ENCODE measurements at regions of chr3 and their contacts with region 1.

Region 1: GRCh38 chr3:13895155-13896105 is 15.6 kb upstream of the WNT7A start:
- DNase-seq: peak; percentile 47
- ATAC-seq: peak; percentile 100
- H3K4me3 ChIP-seq: peak overlapping the region; percentile 67
- H3K27ac ChIP-seq: no peak overlapping the region
- H3K4me1 ChIP-seq: no peaks in the 10 kb centered on the region
- H3K27me3 ChIP-seq: peaks cover 0 to 3% of the 10 kb centered on the region in 2 experiments; a peak in 1 of 4 replicates
- CTCF ChIP-seq: no peak
- EP300 ChIP-seq: no peak
- POLR2A ChIP-seq: no peak
- RAD21 ChIP-seq: no peak

Region 2: GRCh38 chr3:14113965-14114635 is 218.7 kb after region 1 on chr3:
- CTCF ChIA-PET with region 1: interaction called, 22 read pairs
- POLR2A ChIA-PET with region 1: no interaction called
- RAD21 ChIA-PET with region 1: interaction called, 11 read pairs
- SMC1A ChIA-PET with region 1: interaction called, 8 read pairs
- in situ Hi-C with region 1: loop called (anchors 5 kb)
- intact Hi-C with region 1: no loop called
- DNase-seq: no peak
- ATAC-seq: no peak
- H3K4me3 ChIP-seq: no peak overlapping the region
- H3K27ac ChIP-seq: no peak overlapping the region
- H3K4me1 ChIP-seq: no peaks in the 10 kb centered on the region
- H3K27me3 ChIP-seq: no peaks in the 10 kb centered on the region
- CTCF ChIP-seq: peak in 1 of 3 experiments; percentile 17; a peak in 2 of 6 replicates
- EP300 ChIP-seq: no peak
- POLR2A ChIP-seq: no peak
- RAD21 ChIP-seq: peak; percentile 35; the same call in 1 of the 2 replicates

Region 3: GRCh38 chr3:14178247-14179113 is 283.1 kb after region 1 on chr3 and contains the starts of genes LSM3 and XPC:
- CTCF ChIA-PET with region 1: interaction called, 10 read pairs
- POLR2A ChIA-PET with region 1: no interaction called
- RAD21 ChIA-PET with region 1: interaction called, 4 read pairs
- SMC1A ChIA-PET with region 1: interaction called, 5 read pairs
- in situ Hi-C with region 1: no loop called
- intact Hi-C with region 1: no loop called
- DNase-seq: peak; percentile 97
- ATAC-seq: peak; percentile 92
- H3K4me3 ChIP-seq: peak within 1 kb of the TSS; percentile 93
- H3K27ac ChIP-seq: peak within 1 kb of the TSS; percentile 84
- H3K4me1 ChIP-seq: peaks cover 14% of the 10 kb centered on the region
- H3K27me3 ChIP-seq: no peaks in the 10 kb centered on the region
- CTCF ChIP-seq: no peak
- EP300 ChIP-seq: no peak
- POLR2A ChIP-seq: peak; percentile 98
- RAD21 ChIP-seq: no peak
- polyA plus RNA-seq, gene LSM3: 98.1 to 111 TPM
- polyA plus RNA-seq, gene XPC: 4.0 to 6.1 TPM

Region 4: DNA sequence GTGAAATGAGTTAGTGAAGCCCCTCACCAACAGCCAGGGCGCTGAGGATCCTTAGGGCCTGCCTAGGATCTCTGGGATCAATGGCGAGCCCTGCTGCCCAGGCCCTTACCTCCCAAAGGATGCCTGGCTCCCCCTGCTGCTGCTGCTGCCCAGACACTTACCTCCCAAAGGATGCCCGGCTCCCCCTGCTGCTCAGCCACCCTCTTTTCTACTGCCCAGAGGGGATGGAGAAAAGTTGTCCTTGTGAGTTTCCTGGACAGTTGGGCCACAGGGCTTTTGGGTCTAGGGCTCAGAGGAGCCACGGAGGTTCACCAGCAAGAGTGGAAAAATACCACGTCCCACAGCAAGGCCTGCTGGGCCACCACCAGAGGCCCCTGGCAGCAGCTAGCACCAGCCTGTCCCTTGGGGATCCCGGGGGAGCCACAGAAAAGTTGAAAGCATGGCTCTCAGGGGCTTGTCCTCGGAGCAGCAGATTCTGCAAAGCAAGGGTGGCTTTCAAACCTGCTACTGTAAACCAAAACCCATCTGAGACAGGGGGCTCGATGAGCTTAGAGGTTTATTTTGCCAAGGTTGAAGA is 566.4 kb after region 1 on chr3:
- CTCF ChIA-PET with region 1: interaction called, 10 read pairs
- POLR2A ChIA-PET with region 1: no interaction called
- RAD21 ChIA-PET with region 1: interaction called, 6 read pairs
- SMC1A ChIA-PET with region 1: interaction called, 5 read pairs
- in situ Hi-C with region 1: loop called (anchors 5 kb)
- intact Hi-C with region 1: loop called (anchors 5 kb)
- DNase-seq: no peak
- ATAC-seq: peak; percentile 85
- H3K4me3 ChIP-seq: no peak overlapping the region
- H3K27ac ChIP-seq: no peak overlapping the region
- H3K4me1 ChIP-seq: no peaks in the 10 kb centered on the region
- H3K27me3 ChIP-seq: no peaks in the 10 kb centered on the region
- CTCF ChIP-seq: peak; percentile 65 to 96 (median 70); a peak in 5 of 6 replicates
- EP300 ChIP-seq: no peak
- POLR2A ChIP-seq: no peak
- RAD21 ChIP-seq: peak; percentile 87

Measured in GM12878 (cell line).